ENCODE measurements at regions of chr1 and their contacts with region 1.

Region 1: GRCh38 chr1:178310685-178311105 is 186.1 kb downstream of the CLEC20A start:
- DNase-seq: no peak

Region 2: GRCh38 chr1:178388418-178389145 is 77.9 kb after region 1 on chr1:
- intact Hi-C with region 1: loop called (anchors 5 kb)
- DNase-seq: no peak

Region 3: GRCh38 chr1:178625701-178626100 is 315.0 kb after region 1 on chr1:
- intact Hi-C with region 1: no loop called
- DNase-seq: no peak